B cell (primary cell): ENCODE measurements at regions of chr5 and their contacts with region 1.

Region 1: DNA sequence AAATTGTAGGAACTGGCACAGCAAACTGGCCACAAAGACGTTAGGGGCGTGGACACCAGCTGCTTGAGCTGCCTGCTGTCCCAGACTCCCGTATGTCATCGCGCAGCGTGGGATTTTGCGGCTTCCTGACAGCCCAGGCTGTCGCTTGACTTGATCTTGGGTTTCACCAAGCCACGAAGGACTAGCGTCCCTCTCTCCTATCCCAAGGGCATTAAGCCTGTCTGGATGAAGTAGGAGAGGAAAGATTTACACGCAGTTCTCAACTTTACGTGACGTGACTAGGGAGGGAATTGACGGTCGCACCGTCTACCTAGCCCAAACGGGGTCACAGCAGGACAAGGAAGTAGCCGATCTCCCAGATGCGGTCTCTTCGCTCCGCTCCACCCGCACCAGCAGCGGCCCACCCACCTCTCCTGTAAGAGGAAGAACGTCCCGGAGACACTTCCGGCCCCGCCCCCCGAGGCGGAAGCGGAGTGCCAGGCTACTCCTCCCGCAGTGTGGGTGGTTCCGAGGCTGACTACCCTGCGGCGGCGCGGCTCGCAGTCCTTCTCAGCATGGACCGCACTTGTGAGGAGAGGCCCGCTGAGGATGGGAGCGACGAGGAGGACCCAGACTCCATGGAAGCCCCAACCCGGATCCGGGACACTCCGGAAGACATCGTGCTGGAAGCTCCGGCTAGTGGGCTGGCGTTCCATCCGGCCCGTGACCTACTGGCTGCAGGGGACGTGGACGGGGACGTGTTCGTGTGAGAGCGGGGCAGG is at the start of gene WDR55:
- DNase-seq: peak; percentile 94
- ATAC-seq: peak; percentile 97
- H3K4me3 ChIP-seq: peak within 1 kb of the TSS; percentile 56 to 99 (median 98)
- H3K4me3 Mint-ChIP-seq: peak within 1 kb of the TSS; percentile 99
- H3K27ac ChIP-seq: peak within 1 kb of the TSS; percentile 74 to 88
- H3K27ac Mint-ChIP-seq: peak within 1 kb of the TSS; percentile 98
- H3K4me1 ChIP-seq: peaks cover 14 to 17% of the 10 kb centered on the region in 2 donors
- H3K4me1 Mint-ChIP-seq: peaks cover 30% of the 10 kb centered on the region
- H3K27me3 ChIP-seq: no peaks in the 10 kb centered on the region
- H3K27me3 Mint-ChIP-seq: no peaks in the 10 kb centered on the region
- CTCF ChIP-seq: no peak
- total RNA-seq, gene WDR55: 44.7 and 46.2 TPM in 2 replicates

Region 2: GRCh38 chr5:140113699-140114263 is 550.8 kb before region 1 on chr5 and contains the start of gene PURA:
- CTCF ChIA-PET with region 1: no interaction called
- POLR2A ChIA-PET with region 1: no interaction called
- intact Hi-C with region 1: no loop called
- DNase-seq: peak; percentile 96
- ATAC-seq: peak; percentile 91
- H3K4me3 ChIP-seq: peak within 1 kb of the TSS; percentile 49 to 82 (median 78)
- H3K4me3 Mint-ChIP-seq: peak within 1 kb of the TSS; percentile 98
- H3K27ac ChIP-seq: peak within 1 kb of the TSS; percentile 72 to 87
- H3K27ac Mint-ChIP-seq: peak within 1 kb of the TSS; percentile 99
- H3K4me1 ChIP-seq: peaks cover 40 to 58% of the 10 kb centered on the region in 2 donors
- H3K4me1 Mint-ChIP-seq: peaks cover 71% of the 10 kb centered on the region
- H3K27me3 ChIP-seq: peaks cover 5 to 19% (median 11%) of the 10 kb centered on the region in 4 experiments
- H3K27me3 Mint-ChIP-seq: peaks cover 11% of the 10 kb centered on the region
- CTCF ChIP-seq: peak; percentile 17
- total RNA-seq, gene PURA: 23.5 and 26.0 TPM in 2 replicates

Region 3: DNA sequence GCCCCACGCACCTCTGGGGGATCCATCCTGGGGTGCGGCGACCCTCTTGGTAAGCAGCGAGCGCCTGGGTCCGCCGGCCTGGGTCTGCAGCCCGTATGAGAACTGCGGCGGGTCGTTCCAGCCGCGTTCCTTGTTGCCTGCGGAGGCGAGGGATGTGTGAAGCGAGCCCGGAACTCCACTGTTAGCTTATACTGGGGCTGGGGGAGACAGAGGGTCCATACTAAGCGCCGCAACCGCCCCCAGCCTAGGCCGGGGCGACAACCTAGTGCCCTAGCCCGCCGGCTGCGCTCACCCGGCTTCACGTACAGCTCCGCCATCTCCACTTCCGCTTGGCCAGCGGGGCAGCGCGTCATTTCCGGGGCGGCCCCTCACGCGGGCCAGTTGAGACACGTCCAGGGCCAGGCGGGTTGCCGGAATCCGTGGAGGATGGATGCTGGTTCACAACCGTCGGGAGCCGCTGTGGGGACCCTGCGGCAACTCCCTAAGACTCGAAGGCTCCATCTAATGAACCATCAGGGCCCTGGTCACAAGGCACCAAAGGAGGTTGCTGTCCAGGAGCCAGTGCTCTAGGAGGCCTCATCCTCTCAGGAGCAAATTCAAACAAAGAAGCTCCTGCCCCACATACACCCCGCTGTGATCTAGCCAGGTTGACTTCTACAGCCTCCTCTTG is 107.3 kb before region 1 on chr5 and contains the start of gene SRA1:
- CTCF ChIA-PET with region 1: no interaction called
- POLR2A ChIA-PET with region 1: no interaction called
- intact Hi-C with region 1: loop called (anchors 2 kb)
- DNase-seq: peak; percentile 88
- ATAC-seq: peak; percentile 97
- H3K4me3 ChIP-seq: peak within 1 kb of the TSS; percentile 62 to 90 (median 78)
- H3K4me3 Mint-ChIP-seq: peak within 1 kb of the TSS; percentile 94
- H3K27ac ChIP-seq: peak within 1 kb of the TSS; percentile 85 to 90
- H3K27ac Mint-ChIP-seq: peak within 1 kb of the TSS; percentile 93
- H3K4me1 ChIP-seq: peaks cover 18 to 28% of the 10 kb centered on the region in 2 donors
- H3K4me1 Mint-ChIP-seq: peaks cover 47% of the 10 kb centered on the region
- H3K27me3 ChIP-seq: no peaks in the 10 kb centered on the region
- H3K27me3 Mint-ChIP-seq: no peaks in the 10 kb centered on the region
- CTCF ChIP-seq: no peak
- total RNA-seq, gene SRA1: 25.6 and 27.1 TPM in 2 replicates